SK-N-SH (cell line): ENCODE measurements at regions of chr19 and their contacts with region 1.

Region 1: DNA sequence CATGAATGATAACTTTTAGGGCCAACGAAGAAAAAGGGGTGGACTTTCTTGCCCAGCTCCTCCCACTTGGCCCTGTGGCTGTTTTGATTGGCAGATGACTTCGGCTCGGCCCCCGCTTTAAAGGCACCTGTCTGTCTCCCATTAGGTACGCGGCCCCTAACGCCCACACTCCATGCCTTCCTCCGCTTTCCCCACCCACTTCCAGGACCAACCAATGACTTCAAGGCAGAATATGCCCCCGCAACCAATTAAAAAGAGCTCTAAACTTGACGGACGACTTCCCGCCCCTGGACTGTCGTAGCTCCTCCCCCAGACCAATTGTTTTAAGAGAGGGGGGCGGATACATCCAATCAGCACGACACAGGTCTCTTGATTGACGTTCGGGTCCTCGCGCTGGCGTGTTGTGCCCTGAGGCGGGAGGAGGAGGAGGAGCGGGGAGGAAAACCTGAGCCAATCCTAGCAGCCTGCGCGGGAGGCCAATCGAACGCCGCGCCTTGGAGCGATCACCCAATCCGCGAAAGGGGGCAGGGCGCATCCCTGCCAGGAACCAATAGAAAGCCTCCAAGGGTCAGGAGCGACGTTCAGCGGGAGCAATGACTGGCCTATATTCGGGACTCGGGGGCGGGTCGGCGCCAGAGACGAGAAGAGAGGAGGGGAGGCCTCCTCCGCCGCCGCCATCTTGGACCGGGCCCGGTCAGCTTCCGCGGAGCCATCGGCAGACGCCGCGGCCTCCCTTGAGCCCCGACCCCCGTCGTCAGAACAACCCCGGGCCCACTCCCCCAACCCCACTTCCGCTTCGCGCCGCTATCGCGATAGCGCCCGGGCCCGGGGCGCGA is at the start of gene CNOT3:
- DNase-seq: peak; percentile 96
- H3K4me3 ChIP-seq: peak within 1 kb of the TSS; percentile 76 to 86
- H3K27ac ChIP-seq: peak within 1 kb of the TSS; percentile 62 to 88
- H3K4me1 ChIP-seq: peaks cover 0 to 24% of the 10 kb centered on the region in 2 experiments; a peak in 1 of 4 replicates
- H3K27me3 ChIP-seq: no peaks in the 10 kb centered on the region
- CTCF ChIP-seq: no peak
- EP300 ChIP-seq: peak in 1 of 2 experiments; percentile 18; a peak in 1 of 4 replicates
- RAD21 ChIP-seq: no peak
- polyA plus RNA-seq, gene CNOT3: 7.1 and 14.2 TPM in 2 replicates

Region 2: GRCh38 chr19:54073829-54074228 is 63.5 kb before region 1 on chr19:
- CTCF ChIA-PET with region 1: no interaction called
- POLR2A ChIA-PET with region 1: no interaction called
- DNase-seq: no peak
- H3K4me3 ChIP-seq: no peak overlapping the region
- H3K27ac ChIP-seq: no peak overlapping the region
- H3K4me1 ChIP-seq: no peaks in the 10 kb centered on the region
- H3K27me3 ChIP-seq: peaks cover 66% of the 10 kb centered on the region; the same call in 1 of the 2 replicates
- CTCF ChIP-seq: no peak
- EP300 ChIP-seq: no peak
- RAD21 ChIP-seq: no peak

Region 3: GRCh38 chr19:54115109-54116063 is 21.9 kb before region 1 on chr19 and contains the starts of genes PRPF31 and TFPT:
- CTCF ChIA-PET with region 1: interaction called, 3 read pairs
- POLR2A ChIA-PET with region 1: interaction called, 30 read pairs
- DNase-seq: peak; percentile 94
- H3K4me3 ChIP-seq: peak within 1 kb of the TSS; percentile 74 to 78
- H3K27ac ChIP-seq: peak within 1 kb of the TSS; percentile 77 to 92
- H3K4me1 ChIP-seq: peaks cover 0 to 14% of the 10 kb centered on the region in 2 experiments; a peak in 1 of 4 replicates
- H3K27me3 ChIP-seq: no peaks in the 10 kb centered on the region
- CTCF ChIP-seq: no peak
- EP300 ChIP-seq: peak in 1 of 2 experiments; percentile 37; a peak in 1 of 4 replicates
- RAD21 ChIP-seq: no peak
- polyA plus RNA-seq, gene PRPF31: 72.2 and 81.0 TPM in 2 replicates
- polyA plus RNA-seq, gene TFPT: 39.8 and 49.7 TPM in 2 replicates